Activated CD4-positive, alpha-beta T cell treated with anti-CD3 and anti-CD28 coated beads, Interleukin-2, amount 10 ng/mL, durations not matched to agents 24 days and 14 days (primary cell): ENCODE measurements at regions of chr11 and their contacts with region 1.

Region 1: GRCh38 chr11:65512306-65512705 is 12.6 kb upstream of the SCYL1 start:
- DNase-seq: no peak
- H3K4me3 Mint-ChIP-seq: no peak overlapping the region
- H3K27ac Mint-ChIP-seq: no peak overlapping the region
- H3K4me1 Mint-ChIP-seq: peaks cover 27% of the 10 kb centered on the region
- H3K27me3 Mint-ChIP-seq: no peaks in the 10 kb centered on the region

Region 2: DNA sequence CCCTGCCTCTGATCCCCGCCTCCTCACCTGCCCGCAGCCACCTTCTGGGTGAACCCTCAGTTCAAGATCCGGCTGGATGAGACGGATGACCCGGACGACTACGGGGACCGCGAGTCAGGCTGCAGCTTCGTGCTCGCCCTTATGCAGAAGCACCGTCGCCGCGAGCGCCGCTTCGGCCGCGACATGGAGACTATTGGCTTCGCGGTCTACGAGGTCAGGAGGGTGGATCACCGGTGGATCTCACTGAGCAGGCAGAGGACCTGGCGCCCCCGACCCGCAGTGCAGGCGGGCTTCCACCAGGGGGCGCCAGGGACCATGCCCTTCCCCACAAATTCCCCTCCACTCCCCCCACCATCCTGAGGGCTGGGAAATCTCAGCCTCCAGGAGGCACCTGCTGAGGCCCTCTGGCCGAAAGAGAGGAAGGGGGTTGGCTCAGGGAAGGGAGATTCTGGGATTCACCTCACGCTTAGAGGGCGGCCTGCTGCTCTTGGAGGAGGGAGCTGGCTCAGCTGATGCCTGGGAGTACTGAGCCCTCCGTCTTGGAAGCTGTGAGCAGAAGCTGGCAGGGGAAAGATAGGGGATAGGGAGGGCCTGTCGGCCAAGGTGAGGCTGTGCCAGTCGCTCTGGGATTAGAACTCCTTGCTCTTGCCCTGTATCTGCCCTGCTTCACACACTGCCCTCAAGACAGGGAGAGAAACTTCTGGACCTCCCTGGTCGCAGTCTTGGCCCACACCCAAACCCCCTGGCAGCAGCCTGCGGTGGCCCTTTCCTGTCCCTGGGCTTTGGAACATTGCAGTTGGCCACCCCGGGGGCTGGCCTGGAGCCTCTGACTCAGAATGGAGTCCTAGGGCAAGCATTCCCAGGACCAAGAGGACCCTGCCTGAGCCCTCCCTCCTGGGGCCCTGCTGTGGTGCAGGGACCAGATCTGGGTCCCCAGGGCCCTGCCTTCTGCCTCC is 307.4 kb before region 1 on chr11:
- intact Hi-C with region 1: loop called (anchors 5 kb)
- DNase-seq: peak; percentile 84
- H3K4me3 Mint-ChIP-seq: no peak overlapping the region
- H3K27ac Mint-ChIP-seq: no peak overlapping the region
- H3K4me1 Mint-ChIP-seq: peaks cover 6% of the 10 kb centered on the region
- H3K27me3 Mint-ChIP-seq: no peaks in the 10 kb centered on the region